ENCODE measurements at regions of chr3 and their contacts with region 1.

Region 1: DNA sequence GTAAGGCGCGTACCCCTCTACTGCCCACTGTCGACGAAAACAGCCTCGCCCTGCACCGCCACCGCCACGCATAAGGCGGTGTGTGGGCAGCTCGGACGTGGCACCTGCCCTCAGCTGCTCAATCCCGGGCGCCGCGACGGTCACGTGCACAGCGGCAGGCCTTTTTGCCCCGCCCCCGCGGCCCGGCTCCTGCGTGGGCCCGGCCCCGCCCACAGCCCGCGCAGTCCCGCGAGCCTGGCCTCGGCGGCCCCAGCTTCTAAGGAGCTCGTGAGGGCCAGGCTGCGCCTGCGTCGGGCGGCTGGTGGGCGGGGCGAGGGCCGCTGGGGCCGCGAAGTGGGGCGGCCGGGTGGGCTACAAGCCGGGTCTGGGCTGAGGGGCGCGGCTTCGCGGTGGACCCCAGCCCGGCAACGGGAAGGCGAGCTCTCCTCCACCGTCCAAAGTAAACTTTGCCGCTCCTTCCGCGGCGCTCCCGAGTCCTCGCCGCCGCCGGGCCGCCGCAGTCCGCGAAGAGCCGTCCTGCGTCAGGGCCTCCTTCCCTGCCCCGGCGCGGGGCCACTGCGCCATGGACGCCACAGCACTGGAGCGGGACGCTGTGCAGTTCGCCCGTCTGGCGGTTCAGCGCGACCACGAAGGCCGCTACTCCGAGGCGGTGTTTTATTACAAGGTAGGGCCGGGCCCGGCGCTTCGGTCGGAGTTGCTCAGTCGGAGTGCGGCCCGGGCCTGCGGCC is at the start of gene CAPN7:
- DNase-seq: peak; percentile 90 to 98 (median 92)
- ATAC-seq: peak; percentile 96
- H3K4me3 ChIP-seq: peak within 1 kb of the TSS; percentile 91
- H3K4me3 Mint-ChIP-seq: peak within 1 kb of the TSS; percentile 85 to 96 (median 94)
- H3K27ac ChIP-seq: peak within 1 kb of the TSS; percentile 94
- H3K27ac Mint-ChIP-seq: peak within 1 kb of the TSS; percentile 87 to 96 (median 93)
- H3K4me1 ChIP-seq: peaks cover 11 to 15% of the 10 kb centered on the region in 2 donors
- H3K4me1 Mint-ChIP-seq: peaks cover 19 to 52% (median 36%) of the 10 kb centered on the region in 7 donors
- H3K27me3 ChIP-seq: no peaks in the 10 kb centered on the region
- H3K27me3 Mint-ChIP-seq: no peaks in the 10 kb centered on the region
- total RNA-seq, gene CAPN7: 34.4 to 104 (median 70.4) TPM

Region 2: DNA sequence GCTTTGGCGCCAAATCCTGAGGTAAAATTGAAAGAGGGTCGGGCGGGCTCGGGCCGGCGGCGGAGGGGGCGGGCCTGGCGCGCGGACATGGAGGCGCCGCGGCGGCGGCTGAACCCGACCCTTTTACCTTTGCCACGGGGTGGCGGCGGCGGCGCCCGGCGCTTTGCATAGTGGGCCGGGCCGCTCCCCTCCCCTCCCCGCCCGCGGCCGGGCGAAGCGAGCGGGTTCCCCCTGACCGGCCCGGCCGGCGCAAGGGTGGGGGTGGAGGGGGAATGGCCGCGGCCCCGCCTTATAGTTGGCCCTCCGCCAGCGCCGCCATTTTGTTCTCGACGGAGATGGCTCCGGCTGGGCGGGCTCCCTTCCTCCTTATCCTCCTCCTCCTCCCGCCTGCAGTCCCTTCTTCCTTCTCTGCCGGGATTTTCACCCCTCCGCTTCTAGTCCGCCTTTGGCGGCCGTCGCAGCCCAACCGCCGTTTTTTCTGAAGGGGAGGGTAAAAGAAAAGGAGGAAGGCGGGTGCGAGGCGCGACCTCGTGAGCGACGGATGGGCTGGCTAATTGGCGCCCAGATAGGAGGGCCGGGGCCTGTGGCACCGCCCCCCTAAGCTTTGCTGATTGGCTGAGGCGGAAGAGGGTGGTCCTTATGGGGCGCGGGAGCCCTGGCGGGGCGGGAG is 258.1 kb before region 1 on chr3:
- CTCF ChIA-PET with region 1: no interaction called
- POLR2A ChIA-PET with region 1: no interaction called
- intact Hi-C with region 1: loop called (anchors 1 kb)
- DNase-seq: peak; percentile 93 to 98 (median 96)
- ATAC-seq: peak; percentile 94
- H3K4me3 ChIP-seq: peak overlapping the region; percentile 93
- H3K4me3 Mint-ChIP-seq: peak overlapping the region; percentile 97 to 100 (median 98)
- H3K27ac ChIP-seq: peak overlapping the region; percentile 99
- H3K27ac Mint-ChIP-seq: peak overlapping the region; percentile 98 to 100 (median 100)
- H3K4me1 ChIP-seq: peaks cover 19 to 22% of the 10 kb centered on the region in 2 donors
- H3K4me1 Mint-ChIP-seq: peaks cover 31 to 74% (median 60%) of the 10 kb centered on the region in 7 donors
- H3K27me3 ChIP-seq: no peaks in the 10 kb centered on the region
- H3K27me3 Mint-ChIP-seq: peaks cover 0 to 2% (median 0%) of the 10 kb centered on the region in 5 donors

Region 3: DNA sequence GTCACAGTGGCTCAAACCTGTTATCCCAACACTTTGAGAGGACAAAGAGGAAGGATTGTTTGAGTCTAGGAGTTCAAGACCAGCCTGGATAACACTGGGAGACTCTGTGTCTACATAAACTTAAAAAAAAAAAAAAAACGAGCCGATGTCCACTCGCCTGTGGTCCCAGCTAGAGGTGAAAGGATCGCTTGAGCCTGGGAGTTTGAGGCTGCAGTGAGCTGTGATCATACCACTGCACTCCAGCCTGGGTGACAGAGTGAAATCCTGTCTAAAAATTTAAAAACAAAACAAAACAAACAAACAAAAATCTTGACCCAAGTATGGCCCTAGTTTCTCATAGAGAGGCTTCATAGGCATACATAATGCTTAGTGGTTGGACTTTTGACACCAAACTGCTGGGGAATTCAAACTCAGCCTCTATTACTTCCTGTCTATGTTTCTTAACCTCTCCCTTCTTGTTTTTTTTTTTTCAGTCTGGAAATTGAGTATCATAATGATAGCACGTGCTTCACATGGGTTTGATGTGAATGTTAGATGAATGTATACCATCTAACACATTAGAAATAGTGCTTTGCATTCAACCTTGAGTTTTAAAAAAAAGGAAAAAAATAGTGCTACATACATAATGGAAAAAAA is 46.5 kb before region 1 on chr3:
- CTCF ChIA-PET with region 1: no interaction called
- POLR2A ChIA-PET with region 1: no interaction called
- intact Hi-C with region 1: no loop called
- DNase-seq: no peak
- ATAC-seq: peak; percentile 16
- H3K4me3 ChIP-seq: no peak overlapping the region
- H3K4me3 Mint-ChIP-seq: no peak overlapping the region
- H3K27ac ChIP-seq: no peak overlapping the region
- H3K27ac Mint-ChIP-seq: no peak overlapping the region
- H3K4me1 ChIP-seq: no peaks in the 10 kb centered on the region
- H3K4me1 Mint-ChIP-seq: peaks cover 0 to 7% (median 0%) of the 10 kb centered on the region in 7 donors
- H3K27me3 ChIP-seq: no peaks in the 10 kb centered on the region
- H3K27me3 Mint-ChIP-seq: peaks cover 14 to 33% (median 19%) of the 10 kb centered on the region in 5 donors

Region 4: GRCh38 chr3:15241341-15241740 is 35.2 kb after region 1 on chr3:
- CTCF ChIA-PET with region 1: interaction called, 3 read pairs
- POLR2A ChIA-PET with region 1: interaction called, 3 read pairs
- intact Hi-C with region 1: loop called in 1 of 2 experiments (anchors 5 kb)
- DNase-seq: peak in 6 of 9 donors; percentile 26 to 47 (median 38)
- ATAC-seq: peak; percentile 74
- H3K4me3 ChIP-seq: no peak overlapping the region
- H3K4me3 Mint-ChIP-seq: no peak overlapping the region
- H3K27ac ChIP-seq: no peak overlapping the region
- H3K27ac Mint-ChIP-seq: peak overlapping the region in 2 of 9 donors; percentile 36 to 52
- H3K4me1 ChIP-seq: no peaks in the 10 kb centered on the region
- H3K4me1 Mint-ChIP-seq: peaks cover 4 to 16% (median 9%) of the 10 kb centered on the region in 7 donors
- H3K27me3 ChIP-seq: no peaks in the 10 kb centered on the region
- H3K27me3 Mint-ChIP-seq: no peaks in the 10 kb centered on the region

Region 5: DNA sequence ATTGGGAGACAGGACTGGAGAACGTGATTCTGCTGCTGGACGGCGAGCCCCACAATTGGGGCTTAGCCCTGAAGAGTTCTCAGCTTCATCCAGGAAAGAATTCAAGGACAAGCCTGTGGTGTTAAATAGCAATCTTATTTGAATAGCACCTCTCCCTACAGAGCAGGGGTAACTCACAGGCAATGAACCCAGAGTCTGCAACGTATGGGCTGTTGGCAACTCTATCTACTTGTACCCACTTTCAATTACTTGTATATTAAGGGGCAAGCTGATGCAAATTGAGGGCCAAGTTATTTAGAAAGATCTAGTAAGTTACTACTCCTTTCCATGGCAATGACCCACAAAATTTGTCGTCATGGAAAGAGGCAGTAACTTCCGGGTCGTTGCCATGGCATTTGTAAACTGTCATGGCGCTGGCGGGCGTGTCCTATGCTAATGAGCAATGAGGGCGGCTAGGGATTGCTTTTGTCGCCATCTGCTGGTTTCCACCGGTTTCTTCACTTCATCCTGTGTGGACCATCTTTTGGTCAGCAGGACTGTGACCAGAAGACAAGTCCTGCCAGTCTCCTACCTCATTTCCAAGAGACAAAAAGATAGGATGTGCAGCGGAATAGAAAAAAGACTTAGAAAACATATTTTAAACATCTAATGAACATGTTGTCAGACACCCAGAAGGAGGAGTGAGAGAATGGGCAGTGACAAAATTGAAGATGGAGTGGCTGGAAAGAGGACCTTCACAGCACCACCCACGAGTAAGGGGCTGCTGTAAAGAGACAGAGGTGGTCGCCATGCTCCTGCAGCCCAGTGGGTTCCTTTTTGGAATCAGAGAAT is 172.1 kb after region 1 on chr3:
- CTCF ChIA-PET with region 1: interaction called, 5 read pairs
- POLR2A ChIA-PET with region 1: no interaction called
- intact Hi-C with region 1: loop called (anchors 1 kb)
- DNase-seq: peak; percentile 80 to 96 (median 93)
- ATAC-seq: peak; percentile 99
- H3K4me3 ChIP-seq: no peak overlapping the region
- H3K4me3 Mint-ChIP-seq: peak overlapping the region in 5 of 10 donors; percentile 9 to 54 (median 17)
- H3K27ac ChIP-seq: peak overlapping the region; percentile 76
- H3K27ac Mint-ChIP-seq: peak overlapping the region; percentile 78 to 97 (median 93)
- H3K4me1 ChIP-seq: peaks cover 4 to 5% of the 10 kb centered on the region in 2 donors
- H3K4me1 Mint-ChIP-seq: peaks cover 8 to 14% (median 13%) of the 10 kb centered on the region in 7 donors
- H3K27me3 ChIP-seq: no peaks in the 10 kb centered on the region
- H3K27me3 Mint-ChIP-seq: no peaks in the 10 kb centered on the region

Region 6: GRCh38 chr3:15557511-15557946 is 351.4 kb after region 1 on chr3:
- CTCF ChIA-PET with region 1: interaction called, 3 read pairs
- POLR2A ChIA-PET with region 1: interaction called, 3 read pairs
- intact Hi-C with region 1: loop called (anchors 1 kb)
- DNase-seq: peak; percentile 13 to 73 (median 62)
- ATAC-seq: peak; percentile 92
- H3K4me3 ChIP-seq: no peak overlapping the region
- H3K4me3 Mint-ChIP-seq: peak overlapping the region in 1 of 10 donors; percentile 0
- H3K27ac ChIP-seq: no peak overlapping the region
- H3K27ac Mint-ChIP-seq: peak overlapping the region in 2 of 9 donors; percentile 19 to 64
- H3K4me1 ChIP-seq: peaks cover 0 to 15% of the 10 kb centered on the region in 2 donors
- H3K4me1 Mint-ChIP-seq: peaks cover 0 to 35% (median 11%) of the 10 kb centered on the region in 7 donors
- H3K27me3 ChIP-seq: no peaks in the 10 kb centered on the region
- H3K27me3 Mint-ChIP-seq: no peaks in the 10 kb centered on the region

Region 7: GRCh38 chr3:16177962-16178627 is 972.0 kb after region 1 on chr3:
- CTCF ChIA-PET with region 1: interaction called, 3 read pairs
- POLR2A ChIA-PET with region 1: no interaction called
- intact Hi-C with region 1: loop called in 1 of 2 experiments (anchors 1 kb)
- DNase-seq: peak; percentile 10 to 72 (median 48)
- ATAC-seq: peak; percentile 75
- H3K4me3 ChIP-seq: no peak overlapping the region
- H3K4me3 Mint-ChIP-seq: peak overlapping the region in 2 of 10 donors; percentile 38 to 39
- H3K27ac ChIP-seq: no peak overlapping the region
- H3K27ac Mint-ChIP-seq: peak overlapping the region in 1 of 9 donors; percentile 40
- H3K4me1 ChIP-seq: no peaks in the 10 kb centered on the region
- H3K4me1 Mint-ChIP-seq: peaks cover 0 to 7% (median 5%) of the 10 kb centered on the region in 7 donors
- H3K27me3 ChIP-seq: no peaks in the 10 kb centered on the region
- H3K27me3 Mint-ChIP-seq: peaks cover 9 to 23% (median 19%) of the 10 kb centered on the region in 5 donors

Measured in naive thymus-derived CD4-positive, alpha-beta T cell (primary cell).